ENCODE measurements at regions of chr1 and their contacts with region 1.

Region 1: DNA sequence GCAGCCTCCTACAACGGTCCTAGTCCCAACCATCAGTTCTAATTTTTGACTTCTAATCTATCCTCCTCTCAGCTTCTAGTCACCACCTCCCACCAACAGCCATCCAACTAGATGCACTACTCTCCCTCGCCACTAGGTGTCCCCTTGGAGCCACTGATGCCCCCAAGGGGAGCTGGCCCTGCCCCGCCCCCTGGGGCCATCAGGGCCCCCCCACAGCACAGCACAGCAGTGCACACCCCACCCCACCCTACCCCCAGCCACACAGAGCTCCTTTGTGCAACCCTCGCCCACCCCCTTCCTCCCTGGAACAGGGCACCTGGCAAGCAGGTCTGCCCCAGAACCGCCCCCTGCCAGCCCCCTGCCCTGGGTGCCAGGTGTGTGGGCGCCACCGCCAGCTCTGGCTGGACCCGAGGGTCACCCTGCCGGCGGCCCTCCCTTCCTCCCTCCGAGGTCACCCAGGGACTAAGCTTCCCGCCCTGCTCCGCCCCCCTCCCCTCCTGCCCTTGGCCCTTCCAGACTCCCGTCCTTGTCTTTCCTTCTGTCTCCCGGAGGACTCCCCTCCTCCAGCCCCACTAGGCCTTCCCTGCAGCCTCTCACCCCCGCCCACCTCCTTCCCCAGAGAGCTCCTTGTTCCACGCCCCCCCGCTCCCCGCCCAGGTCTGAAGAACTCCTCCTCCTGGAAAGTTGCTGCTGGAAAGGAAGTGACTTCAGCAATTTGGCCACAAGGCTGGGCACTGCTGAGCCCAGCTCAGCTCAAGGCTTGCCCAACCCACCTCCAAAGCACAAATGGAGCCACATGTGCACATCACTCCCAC is 47.0 kb downstream of the AHDC1 start:
- DNase-seq: peak; percentile 80
- H3K4me3 ChIP-seq: no peak overlapping the region; the same call in 1 of the 2 replicates
- H3K27ac ChIP-seq: peak overlapping the region; percentile 43
- H3K27me3 ChIP-seq: no peaks in the 10 kb centered on the region
- CTCF ChIP-seq: peak; percentile 89

Region 2: DNA sequence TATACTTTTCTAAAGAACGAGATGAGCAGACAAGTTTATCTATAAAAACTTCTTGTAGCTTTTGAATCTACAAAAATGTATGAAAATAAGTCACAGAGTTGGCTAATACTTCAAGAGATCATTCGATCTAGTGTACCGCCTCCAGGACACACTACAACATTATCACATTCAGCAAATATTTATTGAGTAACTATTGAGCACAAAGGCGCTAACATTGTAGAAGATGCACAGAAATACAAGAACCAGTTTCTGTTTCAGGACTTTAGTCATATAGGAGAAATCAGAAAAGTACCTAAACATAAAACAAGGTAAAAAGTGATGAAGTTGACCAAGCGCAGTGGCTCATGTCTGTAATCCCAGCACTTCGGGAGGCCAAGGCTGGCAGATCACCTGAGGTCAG is 87.7 kb before region 1 on chr1:
- CTCF ChIA-PET with region 1: interaction called, 10 read pairs
- POLR2A ChIA-PET with region 1: no interaction called
- DNase-seq: no peak
- H3K4me3 ChIP-seq: no peak overlapping the region
- H3K27ac ChIP-seq: no peak overlapping the region
- H3K27me3 ChIP-seq: no peaks in the 10 kb centered on the region
- CTCF ChIP-seq: no peak

Region 3: DNA sequence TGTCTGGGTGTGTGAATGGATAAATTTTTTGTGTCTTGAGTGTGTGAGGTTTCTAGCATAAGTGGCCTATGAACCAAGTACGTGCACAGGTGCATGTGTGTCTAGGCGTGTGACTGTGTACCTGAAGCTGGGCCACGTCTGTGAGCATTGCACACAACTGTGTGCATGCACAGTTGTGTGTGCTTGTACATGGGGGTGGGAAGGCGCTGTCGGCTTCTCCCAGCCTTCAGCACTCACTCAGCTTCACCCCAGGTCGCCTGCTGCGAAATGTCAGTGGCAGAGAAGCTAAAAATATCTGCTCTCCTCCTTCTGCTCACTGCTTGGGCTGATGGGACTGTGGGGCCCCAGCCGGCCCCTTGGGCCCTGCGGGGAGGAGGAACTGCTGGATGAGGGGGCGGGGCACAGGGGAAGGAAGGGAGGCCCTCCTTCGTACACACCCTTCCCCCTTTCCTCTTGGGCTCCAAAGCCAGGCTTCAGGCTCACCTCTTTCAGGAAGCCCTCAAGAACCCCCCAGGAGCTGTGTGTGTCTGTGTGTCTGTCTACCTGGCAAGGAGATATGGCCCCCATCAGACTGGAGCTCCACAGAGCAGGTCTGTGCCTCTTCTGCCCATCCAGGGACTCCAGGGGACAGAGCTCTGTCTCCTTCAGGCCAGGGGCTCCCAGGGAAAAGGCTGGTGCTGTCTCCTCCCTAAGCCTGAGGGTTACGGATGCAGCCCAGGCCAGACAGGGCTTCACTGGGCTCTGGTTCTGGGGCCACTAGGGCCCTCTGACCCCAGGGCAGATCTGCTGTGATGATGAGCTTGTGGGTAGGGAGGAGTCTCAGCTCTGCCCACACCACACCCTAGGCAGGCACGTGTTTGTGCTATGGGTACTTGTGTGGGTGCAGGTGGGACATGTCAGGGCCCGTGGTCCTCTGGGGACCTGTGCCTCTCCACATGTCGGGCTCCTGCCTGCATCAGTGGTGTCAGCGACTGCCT is 31.4 kb before region 1 on chr1:
- CTCF ChIA-PET with region 1: interaction called, 12 read pairs
- POLR2A ChIA-PET with region 1: interaction called, 5 read pairs
- DNase-seq: no peak
- H3K4me3 ChIP-seq: peak overlapping the region; percentile 21
- H3K27ac ChIP-seq: peak overlapping the region; percentile 11
- H3K27me3 ChIP-seq: no peaks in the 10 kb centered on the region
- CTCF ChIP-seq: no peak

Region 4: DNA sequence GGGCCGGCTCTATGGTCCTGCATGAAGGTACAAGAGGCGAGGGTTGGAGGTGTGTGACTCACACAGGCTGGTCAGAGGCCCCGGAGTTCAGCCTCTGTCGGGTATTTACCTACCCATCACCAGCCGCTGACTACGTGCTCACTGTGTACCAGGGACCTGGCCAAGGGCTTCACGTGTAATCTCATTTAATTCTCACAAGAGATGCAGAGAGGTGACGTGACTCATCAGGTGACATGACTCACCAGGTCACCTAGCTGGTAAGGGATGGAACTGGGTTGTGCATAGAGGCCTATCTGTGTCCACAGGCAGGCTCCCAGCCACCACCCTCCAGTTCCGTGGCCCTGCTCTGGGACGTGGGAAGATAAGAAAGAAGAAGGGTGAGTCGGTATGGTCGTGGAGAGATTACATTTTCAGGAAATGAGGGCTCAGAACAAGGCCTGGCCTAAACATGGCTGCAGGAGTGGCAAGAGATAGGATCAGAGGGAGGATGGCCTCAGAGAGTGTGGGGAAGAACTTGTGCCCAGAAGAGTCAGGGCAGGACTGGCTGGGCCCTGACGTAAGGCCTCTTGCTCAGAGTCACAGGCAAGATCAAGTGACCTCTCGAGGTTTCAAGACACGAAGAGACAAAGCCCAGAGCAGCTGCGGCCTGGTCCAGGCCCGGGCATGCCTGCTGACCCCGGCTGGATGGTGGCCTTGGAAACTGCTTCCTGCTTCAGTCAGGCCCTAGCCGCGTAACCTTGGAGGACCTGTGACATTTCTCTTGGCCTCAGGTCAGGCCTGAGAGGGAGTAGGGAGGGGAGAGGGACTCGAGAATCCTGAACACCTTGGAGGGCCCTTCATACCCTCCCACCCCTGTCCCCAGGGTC is 14.3 kb before region 1 on chr1:
- CTCF ChIA-PET with region 1: interaction called, 79 read pairs
- POLR2A ChIA-PET with region 1: interaction called, 6 read pairs
- DNase-seq: no peak
- H3K4me3 ChIP-seq: no peak overlapping the region
- H3K27ac ChIP-seq: peak overlapping the region; percentile 78
- H3K27me3 ChIP-seq: no peaks in the 10 kb centered on the region
- CTCF ChIP-seq: no peak

Region 5: DNA sequence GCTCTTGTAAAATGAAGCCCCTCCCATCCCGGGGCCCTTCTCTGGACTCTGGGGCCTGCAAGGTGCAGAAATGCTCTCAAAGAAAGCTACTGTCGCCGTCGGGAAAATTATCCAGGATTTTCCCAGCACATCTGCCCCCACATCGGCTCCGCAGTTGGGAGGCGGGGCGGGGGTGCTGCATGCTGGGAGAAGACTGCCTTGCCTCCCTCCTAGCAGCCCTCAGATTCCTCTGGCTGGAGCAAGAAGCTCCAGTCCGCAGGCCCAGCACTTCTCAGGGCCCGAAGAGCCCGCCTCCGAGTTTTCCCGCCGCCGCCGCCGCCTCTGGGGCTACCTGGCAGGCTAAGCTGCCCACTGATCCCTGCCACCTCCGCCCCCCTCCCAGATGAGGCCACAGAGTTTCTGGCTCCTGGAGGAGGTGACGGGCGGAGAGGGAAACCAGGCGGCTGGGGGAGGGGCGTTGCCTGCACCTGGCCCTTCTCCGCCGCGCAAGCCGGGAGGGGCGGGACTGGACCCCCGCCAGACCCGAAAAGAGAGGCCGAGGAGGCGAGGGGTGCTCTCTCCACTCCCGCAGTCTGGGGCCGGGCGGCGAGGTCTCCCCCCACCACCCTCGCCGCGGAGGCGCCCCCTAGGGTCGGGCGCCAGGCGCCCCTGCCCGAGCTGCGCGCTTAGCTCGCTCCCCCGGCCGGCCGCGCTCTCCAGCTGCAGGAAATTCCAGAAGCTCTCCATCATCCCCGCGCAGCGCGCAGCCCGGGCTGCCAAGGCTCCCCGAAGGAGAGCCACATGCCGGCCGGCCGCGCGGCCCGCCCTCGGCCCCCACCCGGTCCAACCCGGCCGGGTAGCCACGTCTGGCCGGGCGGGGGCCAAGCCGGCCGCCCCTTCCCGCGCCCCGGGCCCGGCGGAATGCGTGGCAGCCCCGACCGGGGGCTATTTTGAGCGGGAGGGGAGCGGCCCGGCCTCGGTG is 18.2 kb after region 1 on chr1:
- CTCF ChIA-PET with region 1: interaction called, 125 read pairs
- POLR2A ChIA-PET with region 1: interaction called, 7 read pairs
- DNase-seq: peak; percentile 54
- H3K4me3 ChIP-seq: peak overlapping the region; percentile 44; the same call in 1 of the 2 replicates
- H3K27ac ChIP-seq: peak overlapping the region; percentile 77
- H3K27me3 ChIP-seq: no peaks in the 10 kb centered on the region
- CTCF ChIP-seq: peak; percentile 44

Region 6: GRCh38 chr1:27589841-27590426 is 32.9 kb after region 1 on chr1:
- CTCF ChIA-PET with region 1: interaction called, 46 read pairs
- POLR2A ChIA-PET with region 1: interaction called, 4 read pairs
- DNase-seq: no peak
- H3K4me3 ChIP-seq: no peak overlapping the region
- H3K27ac ChIP-seq: peak overlapping the region; percentile 31
- H3K27me3 ChIP-seq: no peaks in the 10 kb centered on the region
- CTCF ChIP-seq: no peak

Region 7: GRCh38 chr1:27662707-27663393 is 105.9 kb after region 1 on chr1:
- CTCF ChIA-PET with region 1: interaction called, 14 read pairs
- POLR2A ChIA-PET with region 1: interaction called, 3 read pairs
- DNase-seq: no peak
- H3K4me3 ChIP-seq: no peak overlapping the region
- H3K27ac ChIP-seq: peak overlapping the region; percentile 21
- H3K27me3 ChIP-seq: no peaks in the 10 kb centered on the region
- CTCF ChIP-seq: peak; percentile 87